ENCODE measurements at regions of chr19 and their contacts with region 1.

Region 1: GRCh38 chr19:32971715-32972540 is at the starts of genes CEP89 and FAAP24:
- DNase-seq: peak; percentile 99 to 100
- H3K4me3 ChIP-seq: peak within 1 kb of the TSS; percentile 66
- H3K4me3 Mint-ChIP-seq: peak within 1 kb of the TSS; percentile 88
- H3K27ac Mint-ChIP-seq: peak within 1 kb of the TSS; percentile 91
- H3K4me1 ChIP-seq: no peaks in the 10 kb centered on the region; the same call in 1 of the 2 replicates
- H3K4me1 Mint-ChIP-seq: no peaks in the 10 kb centered on the region
- H3K27me3 ChIP-seq: no peaks in the 10 kb centered on the region
- H3K27me3 Mint-ChIP-seq: no peaks in the 10 kb centered on the region
- CTCF ChIP-seq: no peak
- total RNA-seq, gene CEP89: 14.5 and 17.3 TPM in 2 replicates
- total RNA-seq, gene FAAP24: 9.6 and 12.0 TPM in 2 replicates

Region 2: DNA sequence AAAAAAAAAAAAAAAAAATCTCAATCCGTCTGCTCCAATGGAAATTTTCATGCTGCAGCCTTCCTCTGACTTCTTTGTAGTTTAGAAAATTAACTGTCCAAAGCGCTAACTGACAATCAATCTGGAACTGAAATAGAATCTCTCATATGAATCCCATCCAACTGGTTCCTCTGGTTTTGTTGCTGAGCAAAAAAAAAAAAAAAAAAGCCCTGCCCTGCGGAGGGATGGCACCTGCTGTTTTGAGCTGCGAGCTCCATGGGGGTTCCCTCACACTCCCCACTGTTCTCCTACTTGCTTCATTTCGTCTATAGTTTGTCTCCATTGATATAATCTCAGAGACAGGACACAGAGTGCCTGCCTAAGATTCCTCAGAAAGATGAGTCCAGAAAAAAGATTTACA is 33.5 kb after region 1 on chr19:
- CTCF ChIA-PET with region 1: no interaction called
- POLR2A ChIA-PET with region 1: no interaction called
- intact Hi-C with region 1: no loop called
- DNase-seq: peak in 1 of 2 experiments; percentile 53
- H3K4me3 ChIP-seq: no peak overlapping the region
- H3K4me3 Mint-ChIP-seq: peak overlapping the region; percentile 15
- H3K27ac Mint-ChIP-seq: peak overlapping the region; percentile 47
- H3K4me1 ChIP-seq: 0 out of 2 replicates have a peak, but pooled peaks cover 3% of the 10 kb centered on the region
- H3K4me1 Mint-ChIP-seq: peaks cover 11% of the 10 kb centered on the region
- H3K27me3 ChIP-seq: no peaks in the 10 kb centered on the region
- H3K27me3 Mint-ChIP-seq: no peaks in the 10 kb centered on the region
- CTCF ChIP-seq: no peak

Region 3: GRCh38 chr19:33029746-33030303 is 57.9 kb after region 1 on chr19:
- CTCF ChIA-PET with region 1: no interaction called
- POLR2A ChIA-PET with region 1: no interaction called
- intact Hi-C with region 1: no loop called
- DNase-seq: no peak
- H3K4me3 ChIP-seq: no peak overlapping the region
- H3K4me3 Mint-ChIP-seq: no peak overlapping the region
- H3K27ac Mint-ChIP-seq: no peak overlapping the region
- H3K4me1 ChIP-seq: peaks cover 17% of the 10 kb centered on the region
- H3K4me1 Mint-ChIP-seq: peaks cover 15% of the 10 kb centered on the region
- H3K27me3 ChIP-seq: no peaks in the 10 kb centered on the region
- H3K27me3 Mint-ChIP-seq: no peaks in the 10 kb centered on the region
- CTCF ChIP-seq: no peak

Region 4: DNA sequence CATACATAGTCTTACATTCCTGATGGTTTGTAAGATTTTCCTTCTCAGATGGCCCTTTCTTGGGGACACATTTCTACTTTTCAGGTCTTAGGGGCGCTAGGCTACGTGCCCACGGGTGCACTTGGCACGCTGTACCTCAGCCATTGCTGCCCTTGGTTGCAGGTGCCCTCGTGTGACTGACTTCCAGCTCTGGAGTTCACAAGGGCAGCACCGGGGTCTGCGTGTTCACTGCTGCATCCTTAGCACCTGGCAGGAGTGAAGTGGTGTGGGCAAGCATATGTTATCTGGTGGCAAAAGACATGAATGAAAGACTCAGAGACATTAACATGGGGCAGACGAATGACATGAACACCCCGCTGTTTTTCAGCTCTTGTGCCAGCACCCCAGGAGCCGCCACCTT is 146.7 kb after region 1 on chr19:
- CTCF ChIA-PET with region 1: interaction called, 3 read pairs
- POLR2A ChIA-PET with region 1: no interaction called
- intact Hi-C with region 1: loop called (anchors 1 kb)
- DNase-seq: no peak
- H3K4me3 ChIP-seq: no peak overlapping the region
- H3K4me3 Mint-ChIP-seq: no peak overlapping the region
- H3K27ac Mint-ChIP-seq: peak overlapping the region; percentile 54
- H3K4me1 ChIP-seq: no peaks in the 10 kb centered on the region
- H3K4me1 Mint-ChIP-seq: peaks cover 7% of the 10 kb centered on the region
- H3K27me3 ChIP-seq: no peaks in the 10 kb centered on the region
- H3K27me3 Mint-ChIP-seq: no peaks in the 10 kb centered on the region
- CTCF ChIP-seq: no peak